Breast epithelium (tissue), 4 donors: ENCODE measurements at regions of chr2 and their contacts with region 1.

Region 1: DNA sequence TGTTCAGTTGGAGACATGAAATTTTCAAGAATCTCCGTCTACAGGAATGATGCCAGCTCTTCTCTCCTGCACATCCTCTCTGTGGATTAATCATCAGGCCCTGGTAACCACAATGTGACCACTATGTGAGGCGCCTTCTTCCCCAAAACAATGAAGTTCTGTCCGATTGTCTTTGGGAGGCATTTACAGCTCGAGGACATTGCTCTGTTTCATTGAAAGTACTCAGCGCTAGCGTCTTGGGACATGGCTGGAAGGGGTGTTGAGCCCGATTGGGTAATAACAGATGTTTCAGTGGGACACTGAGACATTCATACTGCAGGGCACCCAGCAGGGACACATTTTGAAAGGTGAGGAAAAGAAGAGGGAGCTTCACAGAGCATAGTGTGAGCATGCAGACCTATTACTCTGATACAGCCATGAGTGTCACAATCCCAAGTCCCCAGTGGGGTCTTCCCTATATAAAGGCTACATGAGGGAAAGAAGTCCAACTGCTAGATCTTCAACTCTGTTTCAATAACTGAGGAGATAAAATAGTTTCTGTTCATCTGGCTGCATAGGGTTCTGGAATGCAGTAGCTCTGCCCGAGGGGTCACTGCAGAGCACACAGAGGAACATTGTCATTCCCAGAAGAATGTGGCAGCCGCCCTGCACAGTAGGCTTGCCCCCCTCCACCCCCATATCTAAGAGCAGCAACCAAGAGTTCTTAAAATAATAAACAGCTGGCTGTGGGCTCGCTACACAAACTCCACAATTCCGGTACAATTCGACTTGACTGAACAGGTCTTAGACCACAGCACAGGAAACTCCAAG is 237.3 kb downstream of the OSR1 start:
- DNase-seq: peak in 1 of 2 donors; percentile 91
- H3K4me3 ChIP-seq: peak overlapping the region in 1 of 3 donors; percentile 9
- H3K27ac ChIP-seq: peak overlapping the region; percentile 82 to 87
- H3K4me1 ChIP-seq: no peaks in the 10 kb centered on the region
- H3K27me3 ChIP-seq: no peaks in the 10 kb centered on the region
- CTCF ChIP-seq: peak in 1 of 3 donors; percentile 30
- POLR2A ChIP-seq: no peak

Region 2: DNA sequence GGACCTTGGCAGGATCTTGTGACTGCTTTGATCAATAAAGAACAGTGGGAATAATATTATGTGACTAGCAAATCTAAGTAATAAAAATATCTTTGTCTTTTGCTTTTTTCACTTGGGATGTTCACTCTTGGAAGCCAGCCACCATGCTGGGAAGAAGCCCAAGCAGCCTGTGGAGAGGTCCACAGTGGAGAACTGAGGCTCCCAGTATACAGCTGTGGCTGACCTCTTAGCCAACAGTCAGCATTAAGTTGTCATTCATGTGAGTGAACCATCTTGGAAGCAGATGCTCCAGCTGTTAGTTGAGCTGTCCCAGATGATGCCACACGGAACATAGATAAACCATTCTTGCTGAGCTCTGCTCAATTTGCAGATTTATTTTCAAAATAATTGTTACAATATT is 77.2 kb after region 1 on chr2:
- intact Hi-C with region 1: no loop called
- DNase-seq: no peak
- H3K4me3 ChIP-seq: no peak overlapping the region
- H3K27ac ChIP-seq: no peak overlapping the region
- H3K4me1 ChIP-seq: no peaks in the 10 kb centered on the region
- H3K27me3 ChIP-seq: no peaks in the 10 kb centered on the region
- CTCF ChIP-seq: no peak
- POLR2A ChIP-seq: no peak

Region 3: GRCh38 chr2:19989681-19990415 is 868.7 kb after region 1 on chr2 and contains the start of gene WDR35:
- intact Hi-C with region 1: loop called (anchors 5 kb)
- DNase-seq: peak; percentile 79 to 86
- H3K4me3 ChIP-seq: peak within 1 kb of the TSS; percentile 66 to 93 (median 87)
- H3K27ac ChIP-seq: peak within 1 kb of the TSS; percentile 81 to 82
- H3K4me1 ChIP-seq: no peaks in the 10 kb centered on the region
- H3K27me3 ChIP-seq: no peaks in the 10 kb centered on the region
- CTCF ChIP-seq: no peak
- POLR2A ChIP-seq: peak; percentile 73
- total RNA-seq, gene WDR35: 12.5 to 18.7 (median 17.7) TPM